Head of caudate nucleus (tissue), 42 donors: ENCODE measurements at regions of chr2 and their contacts with region 1.

Region 1: GRCh38 chr2:10919771-10920621 is 8.3 kb downstream of the KCNF1 start:
- DNase-seq: peak in 12 of 42 donors; percentile 35 to 64 (median 46)

Region 2: DNA sequence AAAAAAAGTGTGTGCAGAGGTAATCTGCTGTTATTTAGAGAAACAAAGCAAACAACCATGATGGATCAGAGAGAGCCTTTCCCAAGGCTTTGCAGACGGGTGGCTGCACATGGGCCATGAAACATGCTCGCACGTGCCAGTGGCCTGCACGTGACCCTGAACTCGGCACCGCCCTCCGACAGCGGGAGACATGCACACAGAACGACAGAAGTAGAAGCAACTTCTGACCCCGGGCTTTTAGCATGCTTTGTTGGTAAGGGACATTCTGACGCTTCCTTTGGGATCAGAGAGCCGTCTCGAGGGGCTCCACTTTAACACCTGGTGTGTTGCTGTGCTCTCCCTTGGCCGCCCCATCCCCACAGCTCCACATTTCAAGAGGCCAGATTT is 104.3 kb after region 1 on chr2:
- intact Hi-C with region 1: loop called (anchors 10 kb)
- DNase-seq: peak in 1 of 42 donors; percentile 34

Region 3: GRCh38 chr2:11140492-11140891 is 220.5 kb after region 1 on chr2:
- intact Hi-C with region 1: no loop called
- DNase-seq: no peak